PC-3 (cell line): ENCODE measurements at regions of chr11 and their contacts with region 1.

Region 1: DNA sequence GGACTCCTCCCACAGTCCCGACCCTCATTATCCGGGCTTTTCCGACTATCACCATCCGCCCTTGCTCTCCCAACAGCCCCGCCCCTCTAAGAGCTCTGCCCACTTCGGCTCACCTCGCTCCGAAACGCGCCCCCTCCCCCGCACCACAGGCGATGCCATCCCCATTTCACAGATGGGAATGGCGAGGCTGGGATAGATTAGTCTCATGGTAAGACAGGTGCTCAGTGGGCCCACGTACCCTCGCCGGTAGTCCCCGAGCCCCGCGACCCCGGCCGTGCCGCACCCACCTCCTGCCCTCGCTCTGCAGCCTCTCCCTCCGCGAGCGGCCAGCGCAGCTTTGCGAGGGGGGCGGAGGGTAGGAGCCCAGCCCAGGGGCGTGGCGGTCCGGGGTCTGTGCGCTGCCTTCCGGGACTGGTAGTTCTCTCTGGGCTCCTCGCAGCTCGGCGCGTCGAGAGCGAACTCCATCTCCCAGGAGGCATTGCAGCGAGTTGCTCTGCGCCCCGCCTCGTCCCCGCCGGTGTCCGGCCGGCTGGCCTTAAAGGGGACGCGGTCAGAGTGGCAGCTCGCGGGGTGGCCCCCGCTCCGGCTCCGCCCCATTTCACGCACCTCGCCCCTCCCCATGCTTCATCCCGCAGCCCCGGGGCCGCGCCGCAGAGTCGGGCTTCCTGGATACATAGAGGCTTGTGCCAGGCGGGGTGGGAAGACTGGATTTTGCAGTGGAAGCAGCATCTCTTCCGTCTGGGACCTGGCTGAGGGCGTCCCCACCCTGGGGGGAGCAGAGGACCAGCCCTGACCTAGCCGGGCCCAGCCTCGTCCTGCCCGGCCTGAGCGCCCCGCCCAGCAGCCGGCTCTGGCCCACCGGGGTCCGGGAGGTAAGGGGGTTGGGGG is at the starts of genes KCTD21 and USP35:
- DNase-seq: peak; percentile 99
- ATAC-seq: peak; percentile 94
- H3K4me3 ChIP-seq: peak within 1 kb of the TSS; percentile 97
- H3K27ac ChIP-seq: peak within 1 kb of the TSS; percentile 50
- H3K4me1 ChIP-seq: peaks cover 40% of the 10 kb centered on the region
- H3K27me3 ChIP-seq: no peaks in the 10 kb centered on the region
- CTCF ChIP-seq: no peak
- total RNA-seq, gene KCTD21: 9.4 and 13.0 TPM in 2 replicates
- total RNA-seq, gene USP35: 8.5 and 12.0 TPM in 2 replicates

Region 2: DNA sequence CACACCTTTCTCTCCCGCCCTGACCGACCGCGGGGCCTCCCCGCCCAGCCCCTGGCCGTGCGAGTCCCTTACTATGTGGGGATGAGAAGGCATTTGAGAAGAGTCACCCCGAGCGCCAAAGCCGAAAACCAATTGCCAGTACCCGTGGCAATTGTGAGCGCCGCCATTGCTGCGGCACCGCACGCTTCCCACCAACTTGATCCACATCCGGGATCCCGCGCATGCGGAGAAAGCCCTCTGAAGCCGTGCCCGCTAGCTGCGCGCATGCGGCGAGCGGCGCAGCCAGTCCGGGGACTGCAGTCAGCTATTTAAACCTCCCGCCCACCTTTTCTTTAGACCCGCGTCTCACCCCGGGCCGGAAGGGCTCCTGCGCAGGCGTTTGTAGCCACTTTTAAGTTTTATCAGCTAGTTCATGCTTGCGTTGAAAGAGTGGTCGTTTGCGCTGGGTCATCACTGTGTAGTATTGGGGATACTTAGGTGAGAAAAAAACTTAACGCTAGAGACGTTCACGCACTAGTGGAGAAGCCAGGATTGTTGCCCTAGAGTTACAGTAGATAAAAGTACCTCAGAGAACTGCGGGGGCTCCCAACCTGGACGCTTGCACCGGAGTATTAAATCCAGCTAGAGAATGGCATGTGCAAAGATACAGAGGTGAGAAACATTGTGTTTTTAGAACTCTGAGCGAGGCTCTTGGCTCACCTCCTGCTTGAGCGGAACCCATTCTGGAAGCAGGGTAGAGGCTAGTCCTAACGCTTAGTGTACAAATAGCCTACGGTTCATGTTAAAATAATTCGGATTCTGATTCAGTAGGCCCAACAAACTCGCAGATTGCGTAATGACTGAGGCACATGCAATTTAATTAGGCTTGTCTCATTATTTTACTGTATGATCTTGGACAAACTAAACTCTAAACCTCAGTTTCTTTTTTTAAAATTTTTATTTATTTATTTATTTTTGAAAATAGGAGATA is 48.8 kb before region 1 on chr11 and contains the start of gene ALG8:
- CTCF ChIA-PET with region 1: no interaction called
- POLR2A ChIA-PET with region 1: interaction called, 3 read pairs
- intact Hi-C with region 1: loop called (anchors 1 kb)
- DNase-seq: peak; percentile 99
- ATAC-seq: peak; percentile 95
- H3K4me3 ChIP-seq: peak within 1 kb of the TSS; percentile 74
- H3K27ac ChIP-seq: peak within 1 kb of the TSS; percentile 66
- H3K4me1 ChIP-seq: peaks cover 23% of the 10 kb centered on the region
- H3K27me3 ChIP-seq: no peaks in the 10 kb centered on the region
- CTCF ChIP-seq: no peak
- total RNA-seq, gene ALG8: 73.6 and 78.7 TPM in 2 replicates

Region 3: GRCh38 chr11:78170874-78171549 is 17.5 kb before region 1 on chr11:
- CTCF ChIA-PET with region 1: interaction called, 11 read pairs
- POLR2A ChIA-PET with region 1: interaction called, 3 read pairs
- intact Hi-C with region 1: no loop called
- DNase-seq: no peak
- ATAC-seq: no peak
- H3K4me3 ChIP-seq: no peak overlapping the region
- H3K27ac ChIP-seq: no peak overlapping the region
- H3K4me1 ChIP-seq: no peaks in the 10 kb centered on the region
- H3K27me3 ChIP-seq: no peaks in the 10 kb centered on the region
- CTCF ChIP-seq: no peak